Ascending aorta (tissue), 2 donors: ENCODE measurements at regions of chr19 and their contacts with region 1.

Region 1: GRCh38 chr19:10478903-10479384 is 24.2 kb downstream of the KEAP1 start:
- DNase-seq: peak; percentile 85 to 97
- H3K4me3 ChIP-seq: peak overlapping the region; percentile 67 to 73
- H3K27ac ChIP-seq: peak overlapping the region; percentile 31 to 56
- H3K4me1 ChIP-seq: peaks cover 0 to 9% of the 10 kb centered on the region in 2 donors
- H3K27me3 ChIP-seq: no peaks in the 10 kb centered on the region
- CTCF ChIP-seq: peak; percentile 18 to 91 (median 85)

Region 2: DNA sequence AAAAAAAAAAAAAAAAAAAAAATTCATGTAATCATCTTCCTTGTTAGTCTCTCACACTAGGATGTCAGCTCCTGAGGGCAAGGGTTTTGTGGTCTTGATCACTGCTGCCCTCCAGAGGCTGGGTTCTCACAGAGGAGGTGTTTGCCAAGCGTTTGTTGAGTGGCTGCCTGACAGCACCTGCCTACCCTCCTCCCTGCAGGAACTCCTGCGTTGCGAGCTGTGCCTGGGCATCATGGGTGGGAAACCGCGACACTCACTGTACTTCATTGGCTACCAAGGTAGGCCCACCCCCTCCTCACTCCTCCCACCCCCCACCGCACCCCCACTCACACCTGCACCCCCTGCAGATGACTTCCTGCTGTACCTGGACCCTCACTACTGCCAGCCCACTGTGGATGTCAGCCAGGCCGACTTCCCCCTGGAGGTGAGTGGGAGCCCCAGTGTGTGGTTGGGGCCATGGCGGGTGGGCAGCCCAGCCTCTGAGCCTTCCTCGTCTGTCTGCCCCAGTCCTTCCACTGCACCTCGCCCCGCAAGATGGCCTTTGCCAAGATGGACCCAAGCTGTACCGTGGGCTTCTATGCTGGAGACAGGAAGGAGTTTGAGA is 72.9 kb after region 1 on chr19:
- intact Hi-C with region 1: no loop called
- DNase-seq: no peak
- H3K4me3 ChIP-seq: no peak overlapping the region
- H3K27ac ChIP-seq: no peak overlapping the region
- H3K4me1 ChIP-seq: no peaks in the 10 kb centered on the region
- H3K27me3 ChIP-seq: no peaks in the 10 kb centered on the region
- CTCF ChIP-seq: no peak

Region 3: DNA sequence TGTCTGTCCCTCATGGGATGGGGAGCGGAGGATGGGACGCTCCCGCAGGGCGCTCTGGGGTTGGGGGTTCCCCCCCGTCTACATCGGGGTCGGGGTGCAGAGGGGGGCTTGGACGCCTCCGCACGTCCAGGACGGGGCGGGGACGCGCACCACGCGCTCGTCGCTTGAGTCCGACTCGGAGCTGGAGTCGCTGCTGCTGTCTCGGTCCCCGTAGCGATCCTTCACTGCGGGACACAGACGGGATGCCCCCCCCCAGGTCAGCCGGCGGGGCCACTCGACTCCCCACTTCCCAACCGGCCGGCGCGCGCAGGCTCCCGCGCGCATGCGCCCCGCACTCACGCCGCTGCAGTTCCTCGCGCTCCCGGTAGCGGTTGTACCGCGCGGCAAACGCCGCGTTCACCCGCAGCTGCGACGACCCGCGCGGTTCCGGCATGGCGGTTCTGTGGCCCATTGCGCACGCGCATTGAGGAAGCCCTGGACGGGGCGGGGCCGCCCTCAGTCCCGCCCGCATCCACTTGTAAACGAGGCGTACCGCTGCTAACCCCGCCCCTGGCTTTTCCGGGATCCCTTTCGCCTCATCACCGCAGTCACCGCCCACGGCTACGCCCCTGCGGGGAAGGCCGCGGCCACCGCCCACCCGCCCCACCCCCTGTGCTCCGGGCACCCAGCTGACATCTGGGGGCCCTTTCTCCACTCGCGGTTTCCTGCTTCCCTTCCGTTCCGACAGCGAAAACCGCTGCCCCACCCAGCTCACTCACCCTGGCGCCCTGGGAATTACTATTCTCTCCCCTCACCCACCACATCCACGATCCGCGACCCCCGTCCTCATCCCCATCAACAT is 86.8 kb after region 1 on chr19 and contains the start of gene KRI1:
- intact Hi-C with region 1: loop called (anchors 2 kb)
- DNase-seq: peak; percentile 94 to 99
- H3K4me3 ChIP-seq: peak within 1 kb of the TSS; percentile 61 to 98
- H3K27ac ChIP-seq: peak within 1 kb of the TSS; percentile 78 to 93
- H3K4me1 ChIP-seq: peaks cover 12 to 26% of the 10 kb centered on the region in 2 donors
- H3K27me3 ChIP-seq: no peaks in the 10 kb centered on the region
- CTCF ChIP-seq: peak in 2 of 3 experiments; percentile 17 to 68
- total RNA-seq, gene KRI1: 21.9 TPM